Endothelial cell of umbilical vein (primary cell): ENCODE measurements at regions of chr3 and their contacts with region 1.

Region 1: GRCh38 chr3:123028233-123028828 is 768 bp upstream of the SEMA5B start:
- DNase-seq: peak; percentile 67
- H3K4me3 ChIP-seq: peak overlapping the region; percentile 18 to 20 (median 20)
- H3K27ac ChIP-seq: no peak overlapping the region
- H3K4me1 ChIP-seq: peaks cover 17% of the 10 kb centered on the region
- H3K27me3 ChIP-seq: peaks cover 72 to 90% of the 10 kb centered on the region in 2 experiments
- CTCF ChIP-seq: peak; percentile 32 to 40
- POLR2A ChIP-seq: no peak

Region 2: DNA sequence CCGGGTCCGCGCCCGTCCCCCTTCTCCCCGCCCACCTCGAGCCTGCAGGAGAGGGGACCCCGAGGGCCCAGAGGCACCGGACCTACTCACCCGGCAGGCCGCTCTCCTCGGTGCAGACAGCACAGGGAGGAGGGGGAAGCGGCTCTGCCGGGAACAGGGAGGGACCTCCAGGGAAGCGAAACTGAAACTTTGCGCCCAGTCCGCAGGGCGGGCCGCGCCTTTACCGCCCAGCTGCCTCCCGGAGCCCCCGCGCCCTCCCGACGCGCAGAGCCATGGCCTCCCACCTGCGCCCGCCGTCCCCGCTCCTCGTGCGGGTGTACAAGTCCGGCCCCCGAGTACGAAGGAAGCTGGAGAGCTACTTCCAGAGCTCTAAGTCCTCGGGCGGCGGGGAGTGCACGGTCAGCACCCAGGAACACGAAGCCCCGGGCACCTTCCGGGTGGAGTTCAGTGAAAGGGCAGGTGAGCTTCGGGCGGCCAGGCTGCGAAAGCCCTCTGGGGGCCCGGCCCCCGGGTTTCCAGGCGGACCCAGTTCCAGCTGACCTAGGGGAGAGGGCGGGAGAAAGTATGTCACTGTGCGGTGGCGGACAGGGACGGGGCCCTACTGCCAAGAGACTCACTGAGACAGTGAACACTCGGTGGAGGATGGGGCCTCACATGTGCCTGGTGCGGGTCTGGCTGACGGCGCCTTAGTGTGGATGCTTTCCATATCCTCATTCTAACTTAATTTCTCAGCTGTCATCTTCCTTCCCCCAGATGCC is 464.0 kb before region 1 on chr3 and contains the starts of genes DTX3L and PARP9:
- CTCF ChIA-PET with region 1: no interaction called
- POLR2A ChIA-PET with region 1: no interaction called
- dilution Hi-C with region 1: no loop called
- intact Hi-C with region 1: loop called (anchors 1 kb)
- DNase-seq: peak; percentile 77
- H3K4me3 ChIP-seq: peak within 1 kb of the TSS; percentile 60 to 96 (median 74)
- H3K27ac ChIP-seq: peak within 1 kb of the TSS; percentile 63
- H3K4me1 ChIP-seq: peaks cover 8% of the 10 kb centered on the region
- H3K27me3 ChIP-seq: no peaks in the 10 kb centered on the region
- CTCF ChIP-seq: no peak
- POLR2A ChIP-seq: peak; percentile 30
- total RNA-seq, gene DTX3L: 13.8 and 20.5 TPM in 2 replicates
- total RNA-seq, gene PARP9: 9.7 and 12.5 TPM in 2 replicates

Region 3: GRCh38 chr3:122754929-122755328 is 273.4 kb before region 1 on chr3:
- CTCF ChIA-PET with region 1: interaction called, 19 read pairs
- POLR2A ChIA-PET with region 1: no interaction called
- dilution Hi-C with region 1: no loop called
- intact Hi-C with region 1: loop called (anchors 1 kb)
- DNase-seq: peak; percentile 36
- H3K4me3 ChIP-seq: no peak overlapping the region
- H3K27ac ChIP-seq: no peak overlapping the region
- H3K4me1 ChIP-seq: no peaks in the 10 kb centered on the region
- H3K27me3 ChIP-seq: no peaks in the 10 kb centered on the region
- CTCF ChIP-seq: peak; percentile 56 to 68
- POLR2A ChIP-seq: no peak

Region 4: GRCh38 chr3:122942937-122943827 is 85.1 kb before region 1 on chr3:
- CTCF ChIA-PET with region 1: interaction called, 24 read pairs
- POLR2A ChIA-PET with region 1: no interaction called
- dilution Hi-C with region 1: no loop called
- intact Hi-C with region 1: loop called (anchors 1 kb)
- DNase-seq: peak; percentile 17
- H3K4me3 ChIP-seq: no peak overlapping the region
- H3K27ac ChIP-seq: no peak overlapping the region
- H3K4me1 ChIP-seq: peaks cover 11% of the 10 kb centered on the region
- H3K27me3 ChIP-seq: peaks cover 2 to 4% of the 10 kb centered on the region in 2 experiments
- CTCF ChIP-seq: peak; percentile 85 to 91
- POLR2A ChIP-seq: no peak

Region 5: DNA sequence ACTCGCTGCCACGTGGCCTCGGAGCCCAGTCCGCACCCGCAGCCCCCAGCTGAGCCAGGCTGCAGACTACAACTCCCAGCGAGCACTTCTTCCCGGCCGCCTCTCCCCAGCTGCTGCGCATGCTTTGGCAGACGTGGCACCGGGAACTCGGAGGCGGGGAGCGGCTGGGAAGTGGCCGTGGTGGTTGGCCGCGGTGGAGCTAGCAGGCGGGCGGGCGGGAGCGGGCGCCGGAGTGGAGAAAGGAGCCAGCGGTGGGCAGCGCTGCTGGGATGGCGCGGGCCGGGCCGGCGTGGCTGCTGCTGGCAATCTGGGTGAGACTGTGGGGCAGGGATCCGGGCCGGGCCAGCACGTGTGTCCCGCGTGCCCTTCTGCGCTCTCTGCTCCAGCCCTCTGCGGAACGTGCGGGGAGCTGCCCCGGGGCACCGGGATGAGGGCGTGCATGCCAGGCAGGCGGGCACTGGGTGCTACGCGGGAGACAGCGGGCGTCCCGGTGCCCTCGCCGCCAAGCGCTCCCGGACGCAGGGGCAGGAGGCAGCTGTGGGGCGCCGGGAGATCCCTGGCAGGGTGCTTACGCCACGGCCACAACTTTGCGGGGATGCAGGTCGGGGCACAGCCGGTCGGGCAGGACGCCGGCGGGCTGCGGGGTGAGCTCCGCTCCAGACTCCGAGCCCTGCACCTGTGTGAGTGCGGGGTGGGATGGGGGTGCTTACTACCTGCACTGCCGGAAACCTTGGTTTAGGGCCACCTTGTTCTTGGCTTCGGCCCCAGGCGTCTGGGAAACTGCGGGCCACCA is 38.8 kb after region 1 on chr3 and contains the start of gene PDIA5:
- CTCF ChIA-PET with region 1: interaction called, 15 read pairs
- POLR2A ChIA-PET with region 1: no interaction called
- dilution Hi-C with region 1: no loop called
- intact Hi-C with region 1: no loop called
- DNase-seq: peak; percentile 93
- H3K4me3 ChIP-seq: peak within 1 kb of the TSS; percentile 92 to 96 (median 93)
- H3K27ac ChIP-seq: peak within 1 kb of the TSS; percentile 42
- H3K4me1 ChIP-seq: peaks cover 19% of the 10 kb centered on the region
- H3K27me3 ChIP-seq: peaks cover 2 to 3% of the 10 kb centered on the region in 2 experiments
- CTCF ChIP-seq: no peak
- POLR2A ChIP-seq: peak; percentile 80
- total RNA-seq, gene PDIA5: 85.2 and 85.6 TPM in 2 replicates

Region 6: DNA sequence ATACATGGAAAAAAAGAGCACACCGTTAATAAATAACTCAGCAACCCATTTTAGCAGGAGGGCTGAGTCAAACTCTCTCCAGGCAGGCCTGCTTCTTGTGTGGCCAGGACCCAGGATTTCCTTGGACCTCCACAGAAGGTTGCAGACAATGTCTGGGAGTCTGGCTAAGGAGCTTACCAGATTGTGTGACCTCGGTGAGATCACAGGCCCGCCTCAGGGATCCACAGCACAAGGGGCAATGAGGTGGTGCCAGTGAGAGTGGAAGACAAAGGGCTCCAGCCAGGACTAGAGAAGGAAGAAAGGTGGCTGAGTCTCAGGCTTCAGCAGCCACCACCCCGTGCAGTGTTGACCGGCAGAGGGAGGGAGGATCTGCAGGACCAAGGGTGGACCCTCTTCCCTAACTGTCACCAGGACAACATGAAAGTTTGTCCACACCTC is 141.2 kb after region 1 on chr3:
- CTCF ChIA-PET with region 1: no interaction called
- POLR2A ChIA-PET with region 1: no interaction called
- dilution Hi-C with region 1: no loop called
- intact Hi-C with region 1: no loop called
- DNase-seq: no peak
- H3K4me3 ChIP-seq: no peak overlapping the region
- H3K27ac ChIP-seq: no peak overlapping the region
- H3K4me1 ChIP-seq: no peaks in the 10 kb centered on the region
- H3K27me3 ChIP-seq: no peaks in the 10 kb centered on the region
- CTCF ChIP-seq: no peak
- POLR2A ChIP-seq: no peak

Region 7: GRCh38 chr3:123258811-123259420 is 230.6 kb after region 1 on chr3:
- CTCF ChIA-PET with region 1: interaction called, 7 read pairs
- POLR2A ChIA-PET with region 1: no interaction called
- dilution Hi-C with region 1: no loop called
- intact Hi-C with region 1: loop called (anchors 2 kb)
- DNase-seq: peak; percentile 75
- H3K4me3 ChIP-seq: no peak overlapping the region
- H3K27ac ChIP-seq: no peak overlapping the region
- H3K4me1 ChIP-seq: no peaks in the 10 kb centered on the region
- H3K27me3 ChIP-seq: no peaks in the 10 kb centered on the region
- CTCF ChIP-seq: peak; percentile 41 to 55
- POLR2A ChIP-seq: no peak